PC-3 (cell line): ENCODE measurements at regions of chr2 and their contacts with region 1.

Region 1: DNA sequence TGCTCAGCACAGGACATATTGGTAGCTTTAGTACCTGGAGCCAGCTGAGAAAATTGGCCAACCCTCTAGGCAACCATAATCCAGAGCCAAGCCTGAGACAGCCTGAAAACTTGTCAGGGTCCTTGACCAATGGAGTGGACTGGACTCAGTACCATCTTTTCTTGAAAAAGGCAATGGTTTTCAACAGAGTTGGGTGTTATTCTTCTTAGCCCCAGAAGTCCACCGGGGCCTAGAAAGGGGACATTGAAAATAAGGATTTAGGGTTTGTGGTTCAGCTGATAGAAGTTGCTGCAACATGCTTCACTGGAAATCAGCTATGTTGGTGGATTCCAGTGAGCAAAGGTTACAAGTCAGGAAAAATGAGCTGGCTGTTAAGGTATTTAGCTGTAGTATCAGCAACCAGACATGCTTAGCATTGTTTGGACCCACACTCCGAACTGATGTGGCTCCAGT is 22.1 kb upstream of the CNOT11 start:
- DNase-seq: no peak
- ATAC-seq: no peak
- H3K4me3 ChIP-seq: no peak overlapping the region
- H3K27ac ChIP-seq: no peak overlapping the region
- H3K4me1 ChIP-seq: no peaks in the 10 kb centered on the region
- H3K27me3 ChIP-seq: no peaks in the 10 kb centered on the region
- CTCF ChIP-seq: no peak

Region 2: GRCh38 chr2:100599566-100599965 is 631.0 kb before region 1 on chr2:
- CTCF ChIA-PET with region 1: no interaction called
- POLR2A ChIA-PET with region 1: interaction called, 16 read pairs
- intact Hi-C with region 1: no loop called
- DNase-seq: no peak
- ATAC-seq: peak; percentile 40; the same call in 1 of the 2 replicates
- H3K4me3 ChIP-seq: no peak overlapping the region
- H3K27ac ChIP-seq: no peak overlapping the region
- H3K4me1 ChIP-seq: no peaks in the 10 kb centered on the region
- H3K27me3 ChIP-seq: no peaks in the 10 kb centered on the region
- CTCF ChIP-seq: no peak

Region 3: DNA sequence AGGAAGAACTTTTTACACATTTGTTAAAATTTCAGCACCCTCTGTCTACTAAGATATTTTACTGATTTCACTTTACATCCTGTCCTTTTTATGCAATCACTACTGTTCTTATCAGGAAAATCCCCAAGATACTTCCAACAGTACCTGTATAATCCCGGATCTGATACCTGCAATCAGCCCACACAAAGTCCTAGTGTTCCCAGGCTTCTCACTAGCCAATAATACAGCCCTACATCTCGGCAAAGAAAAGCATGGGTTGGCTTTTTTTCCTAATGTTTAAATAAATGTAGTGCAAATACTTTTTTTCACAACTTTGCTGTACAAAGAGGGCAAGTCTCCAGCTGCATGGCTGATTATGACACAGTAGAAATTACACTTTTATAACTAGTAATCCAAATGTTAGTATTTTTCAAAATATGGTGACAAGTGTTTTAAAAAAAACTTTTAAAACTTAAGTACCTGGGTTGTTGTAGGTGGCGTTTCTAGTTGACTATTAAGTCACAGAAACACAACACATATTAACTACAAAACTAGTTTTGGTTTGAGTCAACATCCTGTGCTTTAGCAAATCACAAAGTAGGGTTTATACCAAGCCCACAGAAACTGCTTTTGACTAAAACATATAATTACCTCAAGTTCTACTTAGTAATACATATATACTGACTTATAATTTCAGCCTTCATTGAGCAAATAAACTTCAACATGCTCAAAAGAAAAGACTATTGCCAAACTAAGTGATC is 41.6 kb after region 1 on chr2:
- CTCF ChIA-PET with region 1: no interaction called
- POLR2A ChIA-PET with region 1: no interaction called
- intact Hi-C with region 1: no loop called
- DNase-seq: no peak
- ATAC-seq: no peak
- H3K4me3 ChIP-seq: no peak overlapping the region
- H3K27ac ChIP-seq: no peak overlapping the region
- H3K4me1 ChIP-seq: peaks cover 3% of the 10 kb centered on the region; the same call in 1 of the 2 replicates
- H3K27me3 ChIP-seq: no peaks in the 10 kb centered on the region
- CTCF ChIP-seq: no peak

Region 4: DNA sequence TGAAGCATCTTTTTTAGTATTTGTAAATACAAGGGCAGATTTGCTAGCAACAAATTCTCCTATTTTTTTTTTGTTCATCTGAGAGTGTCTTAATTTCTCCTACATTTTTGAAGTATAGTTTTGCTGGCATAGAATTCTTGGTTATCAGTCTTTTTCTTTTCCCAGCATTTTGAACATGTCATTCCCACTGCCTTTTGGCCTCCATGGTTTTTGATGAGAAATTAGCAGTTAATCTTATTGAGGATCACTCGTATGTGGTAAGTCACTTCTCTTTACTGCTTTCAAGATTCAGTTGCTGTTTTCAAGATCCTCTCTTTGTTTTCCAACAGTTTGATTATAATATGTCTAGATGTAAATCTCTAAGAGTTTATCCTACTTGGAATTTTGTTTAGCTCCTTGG is 94.9 kb after region 1 on chr2:
- CTCF ChIA-PET with region 1: no interaction called
- POLR2A ChIA-PET with region 1: no interaction called
- intact Hi-C with region 1: no loop called
- DNase-seq: no peak
- ATAC-seq: no peak
- H3K4me3 ChIP-seq: no peak overlapping the region
- H3K27ac ChIP-seq: no peak overlapping the region
- H3K4me1 ChIP-seq: peaks cover 33% of the 10 kb centered on the region
- H3K27me3 ChIP-seq: no peaks in the 10 kb centered on the region
- CTCF ChIP-seq: no peak